Naive thymus-derived CD4-positive, alpha-beta T cell (primary cell): ENCODE measurements at regions of chr1 and their contacts with region 1.

Region 1: GRCh38 chr1:30969903-30970302 is 61.3 kb upstream of the SDC3 start:
- DNase-seq: no peak
- ATAC-seq: no peak
- H3K4me3 ChIP-seq: no peak overlapping the region
- H3K4me3 Mint-ChIP-seq: no peak overlapping the region
- H3K27ac ChIP-seq: no peak overlapping the region
- H3K27ac Mint-ChIP-seq: peak overlapping the region in 2 of 9 donors; percentile 9 to 12
- H3K4me1 ChIP-seq: no peaks in the 10 kb centered on the region
- H3K4me1 Mint-ChIP-seq: peaks cover 5 to 41% (median 24%) of the 10 kb centered on the region in 7 donors
- H3K27me3 ChIP-seq: no peaks in the 10 kb centered on the region
- H3K27me3 Mint-ChIP-seq: no peaks in the 10 kb centered on the region

Region 2: GRCh38 chr1:30929135-30929889 is 40.6 kb before region 1 on chr1:
- CTCF ChIA-PET with region 1: no interaction called
- POLR2A ChIA-PET with region 1: no interaction called
- intact Hi-C with region 1: no loop called
- DNase-seq: peak in 7 of 9 donors; percentile 24 to 53 (median 41)
- ATAC-seq: peak; percentile 82
- H3K4me3 ChIP-seq: no peak overlapping the region
- H3K4me3 Mint-ChIP-seq: no peak overlapping the region
- H3K27ac ChIP-seq: no peak overlapping the region
- H3K27ac Mint-ChIP-seq: peak overlapping the region in 7 of 9 donors; percentile 20 to 71 (median 48)
- H3K4me1 ChIP-seq: peaks cover 0 to 11% of the 10 kb centered on the region in 2 donors
- H3K4me1 Mint-ChIP-seq: peaks cover 0 to 6% (median 0%) of the 10 kb centered on the region in 7 donors
- H3K27me3 ChIP-seq: no peaks in the 10 kb centered on the region
- H3K27me3 Mint-ChIP-seq: no peaks in the 10 kb centered on the region

Region 3: GRCh38 chr1:30955448-30956015 is 14.4 kb before region 1 on chr1:
- CTCF ChIA-PET with region 1: interaction called, 5 read pairs
- POLR2A ChIA-PET with region 1: no interaction called
- intact Hi-C with region 1: loop called in 1 of 2 experiments (anchors 2 kb)
- DNase-seq: no peak
- ATAC-seq: no peak
- H3K4me3 ChIP-seq: no peak overlapping the region
- H3K4me3 Mint-ChIP-seq: no peak overlapping the region
- H3K27ac ChIP-seq: no peak overlapping the region
- H3K27ac Mint-ChIP-seq: no peak overlapping the region
- H3K4me1 ChIP-seq: no peaks in the 10 kb centered on the region
- H3K4me1 Mint-ChIP-seq: peaks cover 13 to 54% (median 41%) of the 10 kb centered on the region in 7 donors
- H3K27me3 ChIP-seq: no peaks in the 10 kb centered on the region
- H3K27me3 Mint-ChIP-seq: no peaks in the 10 kb centered on the region